Mammary epithelial cell (primary cell): ENCODE measurements at regions of chr6 and their contacts with region 1.

Region 1: DNA sequence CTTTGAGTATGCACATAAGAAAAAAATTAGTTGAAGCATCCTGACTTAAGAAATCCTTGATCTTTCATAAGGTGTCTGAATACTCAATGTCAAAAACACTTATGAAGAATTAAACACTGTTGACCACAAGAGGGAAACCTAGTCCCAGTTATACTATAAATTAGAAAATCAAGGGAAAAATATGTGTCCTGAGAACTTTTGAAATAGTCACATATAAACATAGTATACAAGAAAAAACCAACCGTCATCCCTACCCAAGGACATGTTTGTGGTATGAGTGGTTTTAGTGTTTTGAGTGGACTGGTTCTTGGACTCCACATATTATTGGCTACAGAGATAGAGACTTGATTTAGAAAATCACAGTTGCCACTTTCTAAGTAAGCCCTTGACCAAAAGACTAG is 7.6 kb upstream of the HLA-DRA start:
- DNase-seq: no peak
- H3K4me3 ChIP-seq: no peak overlapping the region
- H3K27ac ChIP-seq: no peak overlapping the region
- H3K4me1 ChIP-seq: no peaks in the 10 kb centered on the region
- H3K27me3 ChIP-seq: peaks cover 2% of the 10 kb centered on the region
- CTCF ChIP-seq: peak; percentile 19 to 45

Region 2: GRCh38 chr6:32340242-32340641 is 91.8 kb before region 1 on chr6:
- CTCF ChIA-PET with region 1: no interaction called
- dilution Hi-C with region 1: no loop called
- in situ Hi-C with region 1: no loop called
- intact Hi-C with region 1: no loop called
- DNase-seq: no peak
- H3K4me3 ChIP-seq: no peak overlapping the region
- H3K27ac ChIP-seq: no peak overlapping the region
- H3K4me1 ChIP-seq: no peaks in the 10 kb centered on the region
- H3K27me3 ChIP-seq: peaks cover 2% of the 10 kb centered on the region
- CTCF ChIP-seq: no peak

Region 3: GRCh38 chr6:32692019-32692418 is 260.0 kb after region 1 on chr6:
- CTCF ChIA-PET with region 1: no interaction called
- dilution Hi-C with region 1: no loop called
- in situ Hi-C with region 1: no loop called
- intact Hi-C with region 1: loop called (anchors 1 kb)
- DNase-seq: peak; percentile 45
- H3K4me3 ChIP-seq: no peak overlapping the region
- H3K27ac ChIP-seq: no peak overlapping the region
- H3K4me1 ChIP-seq: no peaks in the 10 kb centered on the region
- H3K27me3 ChIP-seq: peaks cover 4% of the 10 kb centered on the region
- CTCF ChIP-seq: peak; percentile 43 to 76